Heart left ventricle (tissue), 16 donors: ENCODE measurements at regions of chr12 and their contacts with region 1.

Region 1: DNA sequence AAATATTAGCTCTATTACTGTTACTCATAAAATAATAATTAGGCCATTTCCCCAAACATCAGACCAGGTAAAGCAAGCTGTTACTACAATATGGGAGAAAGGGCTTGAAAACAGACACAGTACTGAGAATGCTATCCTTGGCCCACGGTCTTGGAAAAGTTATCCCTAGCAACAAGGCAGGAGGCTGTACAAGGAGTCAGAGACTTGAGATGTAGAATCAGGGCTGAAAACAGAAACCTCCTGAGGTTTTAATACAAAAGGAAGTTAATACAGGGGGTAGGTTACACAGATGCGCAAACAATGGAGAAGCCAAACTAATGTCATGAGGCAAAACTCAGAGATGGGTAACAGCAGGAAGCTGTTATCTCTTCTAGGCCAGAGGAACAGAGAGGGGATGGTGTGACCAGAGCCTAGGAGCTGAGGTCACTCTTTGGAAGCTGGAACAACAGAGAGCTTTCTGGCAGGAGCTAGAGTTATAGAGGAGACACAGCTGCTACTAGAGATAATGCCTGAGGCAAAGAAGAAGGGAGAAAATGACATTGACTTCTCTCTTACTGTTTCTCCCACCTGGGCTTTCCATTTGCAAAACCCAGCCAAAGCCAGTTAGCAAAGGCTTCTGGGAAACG is 248.8 kb downstream of the SUDS3 start:
- DNase-seq: peak in 2 of 5 donors; percentile 32 to 35
- ATAC-seq: peak; percentile 82 to 93 (median 84)
- H3K4me3 ChIP-seq: no peak overlapping the region
- H3K27ac ChIP-seq: peak overlapping the region in 1 of 12 donors; percentile 4
- H3K4me1 ChIP-seq: peaks cover 0 to 3% (median 0%) of the 10 kb centered on the region in 12 donors
- H3K27me3 ChIP-seq: no peaks in the 10 kb centered on the region
- CTCF ChIP-seq: no peak
- POLR2A ChIP-seq: no peak

Region 2: GRCh38 chr12:118436002-118436730 is 189.0 kb before region 1 on chr12:
- intact Hi-C with region 1: loop called in 3 of 10 experiments (anchors 10 kb)
- DNase-seq: no peak
- ATAC-seq: peak; percentile 64 to 75 (median 74)
- H3K4me3 ChIP-seq: no peak overlapping the region
- H3K27ac ChIP-seq: no peak overlapping the region
- H3K4me1 ChIP-seq: peaks cover 0 to 10% (median 0%) of the 10 kb centered on the region in 12 donors
- H3K27me3 ChIP-seq: peaks cover 0 to 4% (median 0%) of the 10 kb centered on the region in 9 donors
- CTCF ChIP-seq: peak in 11 of 12 donors; percentile 18 to 55 (median 33)
- POLR2A ChIP-seq: no peak

Region 3: DNA sequence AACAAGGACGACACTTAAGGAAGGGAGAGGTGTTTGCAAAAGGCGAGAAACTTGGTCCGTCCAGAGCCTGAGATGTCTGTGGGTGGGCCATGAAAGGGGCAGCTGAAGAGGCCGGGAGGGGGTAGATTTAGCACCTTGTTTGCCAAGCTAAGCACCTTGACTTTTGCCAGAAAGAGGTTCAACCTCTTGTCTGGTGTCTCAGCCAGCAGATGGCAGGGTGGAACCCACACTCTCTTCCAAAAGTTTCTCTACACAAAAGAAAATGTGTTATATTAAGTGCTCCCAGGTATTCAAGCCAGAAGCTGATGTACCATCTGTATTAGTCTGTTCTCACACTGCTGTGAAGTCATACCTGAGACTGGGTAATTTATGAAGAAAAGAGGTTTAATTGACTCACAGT is 178.9 kb before region 1 on chr12:
- intact Hi-C with region 1: loop called in 4 of 10 experiments (anchors 5 to 10 kb)
- DNase-seq: no peak
- ATAC-seq: no peak
- H3K4me3 ChIP-seq: no peak overlapping the region
- H3K27ac ChIP-seq: no peak overlapping the region
- H3K4me1 ChIP-seq: no peaks in the 10 kb centered on the region
- H3K27me3 ChIP-seq: peaks cover 0 to 2% (median 0%) of the 10 kb centered on the region in 9 donors
- CTCF ChIP-seq: peak in 7 of 12 donors; percentile 16 to 31 (median 23)
- POLR2A ChIP-seq: no peak

Region 4: DNA sequence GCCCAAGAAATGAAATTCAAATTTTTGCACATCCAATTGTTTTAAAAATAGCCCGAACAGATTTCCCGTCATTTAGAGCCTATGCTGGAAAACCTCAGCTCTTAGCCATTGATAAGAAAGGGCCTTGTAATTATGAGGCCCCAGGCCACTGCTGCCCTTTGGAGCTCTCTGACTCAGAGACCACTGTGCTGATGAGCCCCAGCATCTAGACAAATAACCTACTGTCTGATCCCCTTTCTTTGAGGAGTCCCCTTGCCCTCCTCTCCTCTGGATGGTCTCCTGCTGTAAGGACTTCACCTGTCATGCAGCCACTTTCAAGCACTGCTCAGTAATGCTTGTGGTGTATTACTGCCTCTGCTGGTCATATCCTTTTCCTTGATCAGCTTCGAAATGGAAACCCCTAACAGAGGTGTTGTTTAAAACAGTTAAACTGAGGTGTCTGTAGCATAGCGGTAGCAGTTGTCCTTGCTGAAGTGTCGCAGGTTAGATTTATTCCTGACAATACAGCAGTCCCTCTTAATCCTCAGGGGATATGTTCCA is 196.3 kb after region 1 on chr12:
- intact Hi-C with region 1: no loop called
- DNase-seq: no peak
- ATAC-seq: no peak
- H3K4me3 ChIP-seq: no peak overlapping the region
- H3K27ac ChIP-seq: no peak overlapping the region
- H3K4me1 ChIP-seq: no peaks in the 10 kb centered on the region
- H3K27me3 ChIP-seq: peaks cover 0 to 18% (median 0%) of the 10 kb centered on the region in 9 donors
- CTCF ChIP-seq: no peak
- POLR2A ChIP-seq: no peak